Activated T-helper 2 cell treated with anti-CD3 and anti-CD28 coated beads, Interferon-gamma antibody, Interleukin-2, Interleukin-4, amounts not matched to agents 10 μg/mL and 5 μg/mL and 100 μg/mL, durations not matched to agents 14 hours and 24 hours and 36 hours (primary cell): ENCODE measurements at regions of chr2 and their contacts with region 1.

Region 1: GRCh38 chr2:174593574-174594203 is 3.9 kb downstream of the WIPF1 start:
- DNase-seq: peak; percentile 67
- H3K4me3 Mint-ChIP-seq: peak overlapping the region; percentile 86
- H3K27ac Mint-ChIP-seq: peak overlapping the region; percentile 99
- H3K4me1 Mint-ChIP-seq: peaks cover 58% of the 10 kb centered on the region
- H3K27me3 Mint-ChIP-seq: no peaks in the 10 kb centered on the region

Region 2: DNA sequence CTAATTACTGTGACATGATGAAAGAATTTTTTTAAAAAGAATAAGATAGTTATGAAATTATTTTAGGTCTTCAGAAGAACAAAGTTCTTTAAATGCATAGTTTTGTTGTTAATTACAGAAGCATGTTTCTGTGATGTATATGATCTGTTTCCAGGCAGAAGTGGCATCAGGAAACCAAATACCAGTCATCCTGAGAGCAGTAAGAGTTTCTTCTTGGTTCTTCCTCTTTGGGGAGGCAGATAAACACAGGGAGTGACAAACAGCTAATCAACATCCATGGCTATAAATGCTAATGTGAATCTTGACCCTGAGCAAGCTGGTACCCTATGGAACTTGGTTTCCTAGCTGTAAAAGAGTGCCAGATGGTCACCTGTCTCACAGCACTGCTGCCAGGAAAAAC is 25.3 kb before region 1 on chr2:
- intact Hi-C with region 1: loop called (anchors 1 kb)
- DNase-seq: no peak
- H3K4me3 Mint-ChIP-seq: no peak overlapping the region
- H3K27ac Mint-ChIP-seq: peak overlapping the region; percentile 38
- H3K4me1 Mint-ChIP-seq: peaks cover 40% of the 10 kb centered on the region
- H3K27me3 Mint-ChIP-seq: no peaks in the 10 kb centered on the region

Region 3: GRCh38 chr2:174607989-174608865 is 14.5 kb after region 1 on chr2:
- intact Hi-C with region 1: loop called (anchors 1 kb)
- DNase-seq: no peak
- H3K4me3 Mint-ChIP-seq: peak overlapping the region; percentile 45
- H3K27ac Mint-ChIP-seq: peak overlapping the region; percentile 92
- H3K4me1 Mint-ChIP-seq: peaks cover 77% of the 10 kb centered on the region
- H3K27me3 Mint-ChIP-seq: no peaks in the 10 kb centered on the region

Region 4: DNA sequence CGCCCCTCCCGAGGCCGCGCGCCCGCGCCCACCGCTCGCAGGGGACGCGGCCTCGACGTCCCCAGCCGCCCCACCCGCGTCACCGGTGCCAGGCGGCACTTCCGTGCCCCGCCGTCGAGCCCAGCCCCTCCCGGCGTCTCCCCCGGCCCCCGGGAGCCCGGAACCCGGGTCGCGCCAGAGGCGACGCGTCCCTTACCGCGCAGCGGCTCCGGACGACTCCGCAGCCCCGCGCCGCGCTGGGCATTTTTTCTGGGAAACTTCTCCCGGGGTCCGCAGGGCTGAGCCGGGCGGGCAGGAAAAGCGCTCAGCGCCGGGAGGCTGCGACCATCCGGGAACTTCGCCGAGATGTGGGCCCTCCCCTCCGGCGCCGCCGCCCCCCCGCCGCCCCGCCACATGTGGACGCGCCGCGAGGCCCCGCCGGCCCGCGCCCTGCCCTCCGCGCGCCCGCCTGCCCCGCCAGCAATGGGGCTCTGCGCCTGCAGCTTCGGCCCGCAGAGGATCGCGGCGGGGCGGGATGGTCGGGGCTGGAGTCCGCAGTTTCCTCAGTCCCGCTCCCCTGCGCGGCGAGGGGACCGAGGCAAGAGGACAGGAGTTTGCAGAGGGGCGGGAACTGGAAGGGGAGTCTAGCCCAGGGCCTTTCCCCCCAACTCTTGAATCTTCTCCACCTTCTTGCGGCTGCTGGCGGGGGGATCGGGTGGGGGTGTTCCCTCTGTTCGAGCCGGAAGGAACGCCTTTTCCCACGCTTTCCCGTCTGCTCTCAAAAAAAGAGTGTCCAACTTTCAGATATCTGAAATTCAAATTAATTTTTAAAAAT is 89.1 kb after region 1 on chr2:
- intact Hi-C with region 1: loop called (anchors 2 kb)
- DNase-seq: peak; percentile 48
- H3K4me3 Mint-ChIP-seq: peak overlapping the region; percentile 89
- H3K27ac Mint-ChIP-seq: peak overlapping the region; percentile 91
- H3K4me1 Mint-ChIP-seq: peaks cover 28% of the 10 kb centered on the region
- H3K27me3 Mint-ChIP-seq: peaks cover 7% of the 10 kb centered on the region

Region 5: GRCh38 chr2:175167792-175168563 is 574.3 kb after region 1 on chr2 and contains the start of gene ATF2:
- intact Hi-C with region 1: loop called (anchors 5 kb)
- DNase-seq: peak; percentile 98
- H3K4me3 Mint-ChIP-seq: peak within 1 kb of the TSS; percentile 99
- H3K27ac Mint-ChIP-seq: peak within 1 kb of the TSS; percentile 99
- H3K4me1 Mint-ChIP-seq: peaks cover 47% of the 10 kb centered on the region
- H3K27me3 Mint-ChIP-seq: no peaks in the 10 kb centered on the region
- total RNA-seq, gene ATF2: 64.0 and 65.9 TPM in 2 replicates